Prostate gland (tissue), 2 donors: ENCODE measurements at regions of chr21 and their contacts with region 1.

Region 1: DNA sequence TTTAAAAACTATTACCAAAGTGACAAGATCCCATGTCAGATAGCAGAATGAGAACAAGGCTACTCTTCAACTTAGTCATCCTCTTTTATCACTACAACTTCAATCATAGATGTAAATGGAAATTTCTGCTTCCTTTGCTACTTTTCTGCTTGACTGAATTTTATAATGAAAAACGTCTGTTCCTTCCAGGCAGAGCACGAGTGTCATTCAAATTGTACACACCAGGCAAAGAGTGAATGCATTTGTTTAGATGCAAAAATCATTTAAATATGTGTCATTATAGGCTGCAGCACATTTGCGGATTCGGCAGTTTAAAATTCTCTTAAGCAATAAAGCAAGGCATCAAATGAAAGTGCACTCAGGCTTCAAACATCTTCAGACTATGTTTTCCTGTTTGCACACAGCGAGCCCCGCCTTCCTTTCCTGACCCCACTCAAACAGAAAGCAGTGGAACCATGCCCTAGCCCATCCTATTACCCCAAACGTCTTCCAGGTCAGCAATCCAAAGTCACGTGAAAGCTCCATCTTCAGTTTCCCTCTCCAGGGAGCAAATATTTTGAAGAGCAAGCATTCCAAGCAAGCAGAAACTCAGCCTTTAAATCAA is 99.6 kb downstream of the APP start:
- DNase-seq: no peak
- H3K4me3 ChIP-seq: no peak overlapping the region
- H3K27ac ChIP-seq: no peak overlapping the region
- H3K4me1 ChIP-seq: no peaks in the 10 kb centered on the region
- H3K27me3 ChIP-seq: no peaks in the 10 kb centered on the region
- CTCF ChIP-seq: no peak
- POLR2A ChIP-seq: no peak

Region 2: GRCh38 chr21:25903602-25904001 is 167.3 kb before region 1 on chr21:
- intact Hi-C with region 1: no loop called
- DNase-seq: no peak
- H3K4me3 ChIP-seq: no peak overlapping the region
- H3K27ac ChIP-seq: no peak overlapping the region
- H3K4me1 ChIP-seq: no peaks in the 10 kb centered on the region
- H3K27me3 ChIP-seq: no peaks in the 10 kb centered on the region
- CTCF ChIP-seq: no peak
- POLR2A ChIP-seq: no peak

Region 3: GRCh38 chr21:26112127-26112742 is 41.3 kb after region 1 on chr21:
- intact Hi-C with region 1: no loop called
- DNase-seq: no peak
- H3K4me3 ChIP-seq: no peak overlapping the region
- H3K27ac ChIP-seq: no peak overlapping the region
- H3K4me1 ChIP-seq: peaks cover 5% of the 10 kb centered on the region
- H3K27me3 ChIP-seq: no peaks in the 10 kb centered on the region
- CTCF ChIP-seq: no peak
- POLR2A ChIP-seq: no peak

Region 4: GRCh38 chr21:26124421-26124833 is 53.5 kb after region 1 on chr21:
- intact Hi-C with region 1: loop called (anchors 10 kb)
- DNase-seq: no peak
- H3K4me3 ChIP-seq: no peak overlapping the region
- H3K27ac ChIP-seq: peak overlapping the region; percentile 21 to 30
- H3K4me1 ChIP-seq: peaks cover 14% of the 10 kb centered on the region
- H3K27me3 ChIP-seq: no peaks in the 10 kb centered on the region
- CTCF ChIP-seq: no peak
- POLR2A ChIP-seq: no peak

Region 5: DNA sequence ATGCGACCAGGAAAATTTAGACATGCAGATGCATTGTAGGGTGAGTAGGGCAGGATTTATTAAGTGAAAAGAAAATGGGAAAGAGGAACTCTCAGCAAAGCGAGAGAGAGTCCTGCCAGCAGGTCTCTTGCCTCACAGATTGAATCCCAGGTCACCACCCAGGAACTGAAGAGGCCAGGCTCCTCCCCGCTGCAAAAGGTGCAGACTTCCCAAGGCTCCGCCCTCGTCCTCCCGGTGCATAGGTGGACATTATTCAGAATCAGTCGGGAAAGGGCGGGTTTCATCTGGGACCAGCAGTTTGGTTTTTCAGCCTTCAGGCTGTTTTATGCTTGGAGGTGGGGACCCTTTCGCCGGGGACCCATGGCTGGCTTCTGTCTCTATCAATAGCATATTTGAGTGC is 141.3 kb after region 1 on chr21:
- intact Hi-C with region 1: no loop called
- DNase-seq: no peak
- H3K4me3 ChIP-seq: no peak overlapping the region
- H3K27ac ChIP-seq: no peak overlapping the region
- H3K4me1 ChIP-seq: no peaks in the 10 kb centered on the region
- H3K27me3 ChIP-seq: no peaks in the 10 kb centered on the region
- CTCF ChIP-seq: no peak
- POLR2A ChIP-seq: no peak